Activated B cell treated with CpG ODN at 0.5 μM for 24 hours (primary cell): ENCODE measurements at regions of chr12 and their contacts with region 1.

Region 1: DNA sequence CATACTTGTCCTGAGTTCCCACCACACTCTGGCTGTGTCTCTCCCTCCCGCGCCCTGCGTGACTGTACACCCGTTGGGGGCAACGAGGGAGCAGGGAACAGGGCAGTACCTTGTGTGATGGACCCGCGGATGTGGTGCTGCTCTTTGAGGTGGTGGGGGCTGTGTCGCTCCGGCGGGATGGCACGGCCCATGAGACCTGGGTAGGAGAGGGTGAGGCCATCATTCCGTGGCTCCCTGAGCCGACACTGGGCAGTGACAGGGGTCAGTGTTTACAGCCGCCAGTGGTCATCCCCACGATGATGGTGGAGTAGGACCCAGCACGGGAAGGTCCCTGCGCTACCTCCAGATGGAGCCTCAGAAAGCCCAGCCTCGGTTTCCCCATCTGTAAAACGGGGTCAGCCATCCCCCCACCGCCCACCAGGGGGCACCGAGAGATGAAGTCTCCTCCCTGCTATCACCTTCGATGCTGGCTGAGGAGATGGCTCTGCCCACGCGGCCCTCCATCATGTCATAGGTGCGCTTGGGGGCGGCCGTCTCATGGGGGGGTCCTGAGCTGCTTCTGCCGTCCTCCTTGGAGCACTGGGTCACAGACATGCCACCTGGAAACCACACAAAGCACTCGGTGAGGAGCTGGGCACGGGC is 52.9 kb downstream of the RFLNA start:
- DNase-seq: peak; percentile 25
- ATAC-seq: peak; percentile 47
- H3K4me3 Mint-ChIP-seq: no peak overlapping the region
- H3K27ac Mint-ChIP-seq: no peak overlapping the region
- H3K4me1 Mint-ChIP-seq: no peaks in the 10 kb centered on the region
- H3K27me3 Mint-ChIP-seq: no peaks in the 10 kb centered on the region
- CTCF ChIP-seq: no peak

Region 2: DNA sequence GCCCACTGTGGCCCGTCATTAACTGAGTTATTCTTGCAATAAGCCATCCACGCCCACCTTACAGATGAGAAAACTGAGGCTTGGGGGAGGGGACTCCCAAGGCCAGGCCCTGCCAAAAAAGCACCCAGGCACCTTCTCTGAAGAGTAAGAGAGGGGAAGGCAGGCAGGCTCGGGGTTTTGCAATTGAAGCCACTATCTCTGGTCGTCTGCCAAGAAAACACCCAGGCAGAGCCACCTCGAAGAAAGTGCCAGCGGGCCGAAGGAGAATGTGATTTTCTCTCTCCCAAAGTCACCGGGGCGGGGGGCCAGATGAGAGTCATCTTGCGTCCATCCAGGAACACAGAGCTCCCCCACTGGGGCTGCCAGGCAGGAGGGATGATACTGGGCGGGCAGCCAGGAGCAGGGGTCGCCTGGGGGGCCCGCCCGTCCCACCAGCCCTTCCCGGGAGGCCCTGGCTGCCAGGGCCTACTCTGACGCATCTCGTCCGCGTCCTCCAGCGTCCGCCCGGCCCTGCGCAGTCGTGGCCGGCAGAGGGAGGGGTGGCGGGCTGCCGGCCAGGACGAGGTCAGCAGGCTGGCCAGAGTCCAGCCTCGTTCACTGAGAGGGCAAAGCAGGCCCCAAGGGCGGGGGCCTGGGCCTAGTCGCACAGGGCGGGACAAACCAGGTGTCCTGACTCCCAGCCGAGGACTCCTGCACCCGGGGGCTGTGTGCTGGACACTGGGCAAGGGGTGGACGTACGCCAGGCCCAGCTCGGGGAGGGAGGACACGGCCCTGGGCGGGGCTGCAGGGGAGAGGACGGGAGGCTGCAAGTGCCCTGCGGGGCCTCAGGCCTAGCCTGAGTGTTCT is 21.4 kb after region 1 on chr12:
- CTCF ChIA-PET with region 1: no interaction called
- POLR2A ChIA-PET with region 1: no interaction called
- intact Hi-C with region 1: no loop called
- DNase-seq: no peak
- ATAC-seq: no peak
- H3K4me3 Mint-ChIP-seq: no peak overlapping the region
- H3K27ac Mint-ChIP-seq: no peak overlapping the region
- H3K4me1 Mint-ChIP-seq: no peaks in the 10 kb centered on the region
- H3K27me3 Mint-ChIP-seq: no peaks in the 10 kb centered on the region
- CTCF ChIP-seq: no peak

Region 3: GRCh38 chr12:124680863-124681778 is 333.3 kb after region 1 on chr12:
- CTCF ChIA-PET with region 1: interaction called, 3 read pairs
- POLR2A ChIA-PET with region 1: no interaction called
- intact Hi-C with region 1: loop called (anchors 1 kb)
- DNase-seq: peak; percentile 26
- ATAC-seq: peak; percentile 96
- H3K4me3 Mint-ChIP-seq: no peak overlapping the region
- H3K27ac Mint-ChIP-seq: no peak overlapping the region
- H3K4me1 Mint-ChIP-seq: peaks cover 14% of the 10 kb centered on the region
- H3K27me3 Mint-ChIP-seq: peaks cover 6% of the 10 kb centered on the region
- CTCF ChIP-seq: no peak